A549 (cell line): ENCODE measurements at regions of chr3 and their contacts with region 1.

Region 1: GRCh38 chr3:49539659-49540560 is 14.4 kb upstream of the BSN start:
- DNase-seq: peak; percentile 57 to 90
- ATAC-seq: peak; percentile 94 to 97
- H3K4me3 ChIP-seq: peak overlapping the region; percentile 49
- H3K27ac ChIP-seq: peak overlapping the region; percentile 72 to 86
- H3K4me1 ChIP-seq: peaks cover 5% of the 10 kb centered on the region; the same call in 2 of the 3 replicates
- CTCF ChIP-seq: peak; percentile 68
- EP300 ChIP-seq: no peak
- POLR2A ChIP-seq: peak; percentile 50
- RAD21 ChIP-seq: peak; percentile 87 to 93

Region 2: DNA sequence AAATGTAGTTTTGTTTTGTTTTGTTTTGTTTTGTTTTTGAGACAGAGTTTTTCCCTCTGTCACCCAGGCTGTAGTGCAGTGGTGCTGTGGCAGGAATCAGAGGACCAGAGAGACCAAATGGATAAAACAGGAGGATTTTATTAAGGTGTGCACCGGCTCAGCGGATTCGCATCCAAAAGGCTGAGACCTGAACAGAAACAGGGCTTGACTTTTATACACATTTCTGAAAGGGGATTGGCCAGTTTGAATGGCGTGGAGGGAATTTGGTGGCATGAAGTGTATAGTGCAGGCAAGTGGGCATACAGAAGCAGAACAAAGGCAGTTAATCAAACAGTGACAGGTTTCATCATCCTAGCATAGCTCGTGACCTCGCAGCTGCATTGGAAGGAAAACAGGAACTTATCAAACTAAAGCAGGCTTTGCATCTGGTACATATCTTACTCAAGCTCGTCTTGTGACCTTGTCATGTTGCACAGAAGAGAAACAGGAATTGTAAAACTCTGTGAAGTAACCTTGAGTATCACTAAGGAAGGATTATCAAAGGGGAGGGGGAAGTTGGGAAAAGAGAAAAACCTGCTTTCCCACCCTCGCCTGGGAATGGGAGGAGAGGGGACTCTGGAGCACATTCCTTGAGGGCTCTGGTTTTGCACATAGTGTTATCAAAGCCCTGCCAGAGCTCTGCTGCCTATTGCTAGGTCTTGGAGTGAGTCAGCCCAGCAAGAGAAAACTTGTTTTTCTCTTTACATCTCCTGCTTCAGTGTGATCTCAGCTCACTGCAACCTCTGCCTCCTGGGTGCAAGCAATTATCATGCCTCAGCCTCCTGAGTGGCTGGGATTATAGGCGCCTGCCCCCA is 301.4 kb before region 1 on chr3:
- CTCF ChIA-PET with region 1: no interaction called
- POLR2A ChIA-PET with region 1: no interaction called
- DNase-seq: no peak
- ATAC-seq: no peak
- H3K4me3 ChIP-seq: no peak overlapping the region
- H3K27ac ChIP-seq: no peak overlapping the region
- H3K4me1 ChIP-seq: no peaks in the 10 kb centered on the region
- CTCF ChIP-seq: no peak
- EP300 ChIP-seq: no peak
- POLR2A ChIP-seq: no peak
- RAD21 ChIP-seq: no peak

Region 3: DNA sequence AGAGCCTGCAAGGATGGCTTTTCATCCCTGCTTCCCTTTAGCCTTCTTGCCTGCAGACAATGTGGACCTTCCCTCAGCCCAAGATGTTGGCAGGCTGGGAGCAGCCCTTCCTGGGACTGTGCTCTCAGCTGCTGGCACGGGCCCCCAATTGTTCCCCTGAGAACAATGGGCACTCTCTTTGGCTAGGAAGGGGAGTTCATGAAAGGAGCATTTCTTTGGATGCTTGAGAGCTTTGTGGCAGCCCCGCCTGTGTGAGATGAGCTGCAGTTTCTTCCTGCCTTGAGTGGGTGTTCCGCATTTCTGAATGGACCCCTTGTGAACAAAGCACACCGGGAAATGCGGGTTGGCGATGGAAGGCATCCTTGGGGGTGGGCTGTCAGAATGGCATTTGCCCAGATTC is 20.6 kb before region 1 on chr3:
- CTCF ChIA-PET with region 1: interaction called, 33 read pairs
- POLR2A ChIA-PET with region 1: no interaction called
- DNase-seq: no peak
- ATAC-seq: no peak
- H3K4me3 ChIP-seq: no peak overlapping the region
- H3K27ac ChIP-seq: no peak overlapping the region
- H3K4me1 ChIP-seq: no peaks in the 10 kb centered on the region
- CTCF ChIP-seq: no peak
- EP300 ChIP-seq: no peak
- POLR2A ChIP-seq: no peak
- RAD21 ChIP-seq: no peak

Region 4: DNA sequence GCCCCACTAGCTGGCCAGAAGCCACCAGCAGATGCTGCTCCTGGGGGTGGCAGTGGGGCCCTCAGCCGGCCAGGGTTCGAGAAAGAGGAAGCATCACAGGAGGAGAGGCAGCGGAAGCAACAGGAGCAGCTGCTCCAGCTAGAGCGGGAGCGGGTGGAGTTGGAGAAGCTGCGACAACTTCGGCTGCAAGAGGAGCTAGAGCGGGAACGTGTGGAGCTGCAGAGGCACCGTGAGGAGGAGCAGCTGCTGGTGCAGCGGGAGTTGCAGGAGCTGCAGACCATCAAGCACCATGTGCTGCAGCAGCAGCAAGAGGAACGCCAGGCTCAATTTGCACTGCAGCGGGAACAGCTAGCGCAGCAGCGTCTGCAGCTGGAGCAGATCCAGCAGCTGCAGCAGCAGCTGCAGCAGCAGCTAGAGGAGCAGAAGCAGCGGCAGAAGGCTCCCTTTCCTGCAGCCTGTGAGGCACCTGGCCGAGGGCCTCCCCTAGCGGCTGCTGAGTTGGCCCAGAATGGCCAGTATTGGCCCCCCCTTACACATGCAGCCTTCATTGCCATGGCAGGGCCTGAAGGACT is 116.7 kb after region 1 on chr3:
- CTCF ChIA-PET with region 1: interaction called, 29 read pairs
- POLR2A ChIA-PET with region 1: no interaction called
- DNase-seq: no peak
- ATAC-seq: peak in 1 of 2 experiments; percentile 74; a peak in 3 of 6 replicates
- H3K4me3 ChIP-seq: no peak overlapping the region
- H3K27ac ChIP-seq: no peak overlapping the region
- H3K4me1 ChIP-seq: no peaks in the 10 kb centered on the region
- CTCF ChIP-seq: no peak
- EP300 ChIP-seq: no peak
- POLR2A ChIP-seq: no peak
- RAD21 ChIP-seq: peak in 1 of 2 experiments; percentile 42; a peak in 3 of 5 replicates

Region 5: DNA sequence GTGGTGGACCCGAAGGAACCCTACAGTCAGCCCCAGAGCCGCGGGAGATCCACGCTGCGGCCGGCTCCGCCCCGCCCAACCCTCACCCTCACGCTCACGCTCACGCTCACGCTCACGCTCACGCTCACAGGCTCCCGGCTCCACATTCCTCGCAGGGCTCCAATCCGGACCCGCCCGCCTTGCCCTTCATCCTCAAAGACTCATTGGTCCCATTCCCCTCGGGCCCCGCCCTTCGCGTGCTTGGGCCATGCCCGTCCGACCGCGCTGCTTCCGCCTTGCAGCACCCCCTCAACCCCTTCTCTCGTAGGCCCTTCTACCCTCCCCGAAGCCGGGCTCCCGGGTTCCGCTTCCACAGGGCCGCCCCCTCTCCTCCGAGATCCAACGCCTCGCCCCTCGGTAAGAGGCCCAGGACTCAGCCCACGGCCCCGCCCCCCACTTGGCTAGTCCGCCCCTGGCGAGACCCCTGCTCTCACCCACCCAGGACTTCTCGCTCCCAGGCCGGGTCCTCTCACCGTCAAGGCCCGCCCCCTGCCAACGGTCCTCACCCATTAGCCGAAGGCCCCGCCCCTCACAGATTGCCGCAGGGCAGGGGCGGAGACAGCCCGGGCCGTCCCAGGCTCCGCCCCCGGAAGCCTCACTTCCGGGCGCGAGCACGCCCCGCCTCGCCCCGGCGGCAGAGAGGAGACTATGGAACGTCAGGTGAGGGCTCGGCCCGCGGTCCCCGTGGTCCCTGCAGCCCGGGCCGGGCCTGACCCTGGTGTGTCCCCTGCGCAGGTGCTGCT is 134.0 kb after region 1 on chr3 and contains the start of gene APEH:
- CTCF ChIA-PET with region 1: interaction called, 210 read pairs
- POLR2A ChIA-PET with region 1: interaction called, 14 read pairs
- DNase-seq: peak; percentile 90 to 98
- ATAC-seq: peak; percentile 88 to 92
- H3K4me3 ChIP-seq: peak within 1 kb of the TSS; percentile 99
- H3K27ac ChIP-seq: peak within 1 kb of the TSS; percentile 91 to 97
- H3K4me1 ChIP-seq: peaks cover 19% of the 10 kb centered on the region
- CTCF ChIP-seq: no peak
- EP300 ChIP-seq: no peak
- POLR2A ChIP-seq: peak; percentile 51
- RAD21 ChIP-seq: no peak
- polyA plus RNA-seq, gene APEH: 60.8 and 74.9 TPM in 2 replicates

Region 6: GRCh38 chr3:49689046-49689907 is 149.4 kb after region 1 on chr3 and contains the starts of genes MST1 and RNF123:
- CTCF ChIA-PET with region 1: interaction called, 13 read pairs
- POLR2A ChIA-PET with region 1: no interaction called
- DNase-seq: peak; percentile 70 to 89
- ATAC-seq: peak; percentile 54 to 78
- H3K4me3 ChIP-seq: peak within 1 kb of the TSS; percentile 92
- H3K27ac ChIP-seq: peak within 1 kb of the TSS; percentile 86 to 95
- H3K4me1 ChIP-seq: peaks cover 5% of the 10 kb centered on the region; the same call in 1 of the 3 replicates
- CTCF ChIP-seq: peak; percentile 17; the same call in 2 of the 3 replicates
- EP300 ChIP-seq: no peak
- POLR2A ChIP-seq: peak; percentile 73
- RAD21 ChIP-seq: no peak
- polyA plus RNA-seq, gene MST1: 3.6 and 5.0 TPM in 2 replicates
- polyA plus RNA-seq, gene RNF123: 14.4 and 21.3 TPM in 2 replicates